Endothelial cell of umbilical vein (primary cell): ENCODE measurements at regions of chr1 and their contacts with region 1.

Region 1: GRCh38 chr1:214538496-214538895 is 12.9 kb downstream of the PTPN14 start:
- DNase-seq: no peak
- H3K4me3 ChIP-seq: no peak overlapping the region
- H3K27ac ChIP-seq: no peak overlapping the region
- H3K4me1 ChIP-seq: peaks cover 24% of the 10 kb centered on the region
- H3K27me3 ChIP-seq: no peaks in the 10 kb centered on the region
- CTCF ChIP-seq: no peak
- POLR2A ChIP-seq: no peak

Region 2: GRCh38 chr1:214525535-214526019 is 12.9 kb before region 1 on chr1:
- CTCF ChIA-PET with region 1: interaction called, 4 read pairs
- POLR2A ChIA-PET with region 1: no interaction called
- dilution Hi-C with region 1: no loop called
- intact Hi-C with region 1: loop called (anchors 2 kb)
- DNase-seq: no peak
- H3K4me3 ChIP-seq: no peak overlapping the region
- H3K27ac ChIP-seq: no peak overlapping the region
- H3K4me1 ChIP-seq: no peaks in the 10 kb centered on the region
- H3K27me3 ChIP-seq: no peaks in the 10 kb centered on the region
- CTCF ChIP-seq: no peak
- POLR2A ChIP-seq: no peak